ENCODE measurements at regions of chrX and their contacts with region 1.

Region 1: GRCh38 chrX:107227780-107228485 is 21.5 kb downstream of the DNAAF6 start:
- DNase-seq: no peak
- H3K4me3 ChIP-seq: no peak overlapping the region
- H3K27ac ChIP-seq: no peak overlapping the region
- H3K4me1 ChIP-seq: no peaks in the 10 kb centered on the region
- H3K27me3 ChIP-seq: no peaks in the 10 kb centered on the region
- CTCF ChIP-seq: no peak

Region 2: DNA sequence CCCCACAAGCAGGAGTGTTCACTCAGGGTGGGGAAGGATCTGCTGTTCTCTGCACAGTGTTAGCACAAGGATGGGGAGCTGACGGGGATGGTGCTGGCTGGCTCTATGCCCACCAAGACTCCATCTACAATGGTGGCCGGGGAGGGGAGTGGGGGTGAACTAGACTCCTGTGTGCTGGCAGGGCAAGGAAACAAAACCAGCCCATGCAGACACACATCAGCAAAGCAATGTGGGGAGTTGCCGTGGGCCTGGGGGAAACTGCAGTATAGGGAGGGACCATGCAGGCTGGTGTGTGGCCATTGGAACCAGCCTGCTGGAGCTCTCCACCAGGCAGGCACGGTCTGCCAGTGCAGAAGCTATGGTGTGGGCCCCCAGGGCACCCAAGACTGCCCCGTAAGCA is 864.7 kb before region 1 on chrX:
- intact Hi-C with region 1: loop called (anchors 10 kb)
- DNase-seq: no peak
- H3K4me3 ChIP-seq: no peak overlapping the region
- H3K27ac ChIP-seq: no peak overlapping the region
- H3K4me1 ChIP-seq: no peaks in the 10 kb centered on the region
- H3K27me3 ChIP-seq: no peaks in the 10 kb centered on the region
- CTCF ChIP-seq: no peak

Region 3: DNA sequence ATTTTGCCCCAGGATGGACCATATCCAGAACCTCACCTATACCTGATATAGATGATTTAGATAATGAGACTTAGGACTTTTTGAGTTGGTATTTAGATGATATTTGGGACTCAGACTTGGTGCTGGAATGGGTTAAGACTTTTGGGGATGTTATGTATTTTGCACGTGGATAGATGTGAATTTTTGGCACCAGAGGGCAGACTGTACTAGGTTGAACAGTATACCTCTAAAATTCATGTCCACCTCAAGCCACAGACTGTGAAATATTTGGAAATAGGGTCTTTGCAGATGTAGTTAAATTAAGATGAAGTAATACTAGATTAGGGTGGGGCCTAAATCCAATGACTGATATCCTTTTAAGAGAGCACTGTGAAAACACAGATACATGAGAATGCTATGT is 125.0 kb before region 1 on chrX:
- intact Hi-C with region 1: no loop called
- DNase-seq: no peak
- H3K4me3 ChIP-seq: no peak overlapping the region
- H3K27ac ChIP-seq: no peak overlapping the region
- H3K4me1 ChIP-seq: no peaks in the 10 kb centered on the region
- H3K27me3 ChIP-seq: no peaks in the 10 kb centered on the region
- CTCF ChIP-seq: no peak

Measured in tibial artery (tissue), 4 donors.